GM10248 (cell line): ENCODE measurements at regions of chrX and their contacts with region 1.

Region 1: GRCh38 chrX:136028251-136028984 is 43.2 kb downstream of the SLC9A6 start:
- DNase-seq: peak; percentile 20
- CTCF ChIP-seq: peak; percentile 51

Region 2: GRCh38 chrX:136039968-136040367 is 11.6 kb after region 1 on chrX:
- CTCF ChIA-PET with region 1: interaction called, 24 read pairs
- POLR2A ChIA-PET with region 1: no interaction called
- DNase-seq: no peak
- CTCF ChIP-seq: no peak

Region 3: GRCh38 chrX:136115126-136115903 is 86.9 kb after region 1 on chrX:
- CTCF ChIA-PET with region 1: no interaction called
- POLR2A ChIA-PET with region 1: no interaction called
- DNase-seq: no peak
- CTCF ChIP-seq: no peak

Region 4: DNA sequence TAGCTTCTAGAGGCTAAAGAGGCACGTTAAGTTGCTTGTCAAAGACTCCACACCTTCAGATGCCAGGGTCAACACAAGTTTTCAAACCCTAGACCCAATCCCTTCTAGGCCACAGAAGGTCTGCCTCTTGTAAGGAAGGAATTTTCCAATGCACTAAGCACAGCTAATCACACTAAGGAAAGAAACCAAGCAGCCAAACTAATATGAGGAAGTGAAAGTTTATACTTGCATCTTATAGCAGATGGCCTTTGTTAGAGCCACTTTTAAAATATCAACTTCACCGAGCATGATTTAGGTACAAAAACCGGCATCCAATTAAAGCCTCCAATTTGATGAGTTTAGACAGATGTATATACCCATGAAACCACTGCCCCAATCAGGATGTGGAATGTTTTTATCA is 128.8 kb after region 1 on chrX:
- CTCF ChIA-PET with region 1: interaction called, 83 read pairs
- POLR2A ChIA-PET with region 1: no interaction called
- DNase-seq: peak; percentile 17
- CTCF ChIP-seq: no peak

Region 5: GRCh38 chrX:136162831-136163570 is 134.6 kb after region 1 on chrX:
- CTCF ChIA-PET with region 1: interaction called, 83 read pairs
- POLR2A ChIA-PET with region 1: no interaction called
- DNase-seq: peak; percentile 26
- CTCF ChIP-seq: peak; percentile 70

Region 6: DNA sequence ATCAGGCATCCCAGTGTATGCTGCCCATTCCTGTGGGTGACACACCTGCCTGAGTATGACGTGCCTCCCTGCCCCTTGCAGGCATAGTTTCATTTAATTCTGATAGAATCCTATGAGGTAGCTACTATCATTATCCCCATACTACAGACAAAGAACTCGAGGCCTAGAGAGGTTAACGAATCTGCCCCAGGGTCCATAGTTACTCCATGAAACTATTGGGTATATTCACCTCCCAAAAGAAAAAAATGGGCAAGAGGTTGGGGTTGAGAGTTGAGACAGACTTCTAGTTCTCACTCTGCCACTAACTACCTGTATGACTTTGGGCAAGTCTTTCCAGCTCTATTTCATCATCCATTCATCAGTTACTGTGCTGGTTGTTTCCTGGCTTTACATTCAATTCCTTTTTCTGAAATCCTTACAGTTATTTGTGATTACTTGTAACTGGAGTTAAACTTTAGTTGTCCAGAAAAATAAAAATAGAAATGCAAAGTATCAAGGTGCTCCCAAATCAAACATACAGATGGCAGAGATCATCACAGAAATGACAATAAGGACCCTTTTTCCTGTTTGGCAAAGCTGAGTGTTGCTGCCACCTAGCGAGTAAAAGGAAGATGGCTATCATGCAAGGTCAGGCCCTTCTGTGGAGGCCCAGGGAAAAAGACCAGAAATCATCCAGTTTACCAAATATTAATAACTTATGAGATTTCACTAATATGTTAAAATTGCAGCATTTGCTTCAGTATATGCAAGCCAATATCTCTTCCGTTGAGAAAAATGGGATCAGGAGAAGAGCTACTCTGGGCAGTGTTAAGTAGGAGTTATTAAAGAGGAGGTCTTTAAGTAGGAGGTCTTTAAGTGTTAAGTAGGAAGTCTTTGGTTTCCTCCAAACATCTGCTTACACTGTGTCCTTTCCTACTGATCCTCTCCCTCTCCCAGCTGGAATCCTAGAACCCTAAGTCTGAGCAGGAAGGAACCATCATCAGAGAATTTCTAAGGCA is 239.9 kb after region 1 on chrX:
- CTCF ChIA-PET with region 1: interaction called, 35 read pairs
- POLR2A ChIA-PET with region 1: no interaction called
- DNase-seq: peak; percentile 34
- CTCF ChIP-seq: peak; percentile 56

Region 7: DNA sequence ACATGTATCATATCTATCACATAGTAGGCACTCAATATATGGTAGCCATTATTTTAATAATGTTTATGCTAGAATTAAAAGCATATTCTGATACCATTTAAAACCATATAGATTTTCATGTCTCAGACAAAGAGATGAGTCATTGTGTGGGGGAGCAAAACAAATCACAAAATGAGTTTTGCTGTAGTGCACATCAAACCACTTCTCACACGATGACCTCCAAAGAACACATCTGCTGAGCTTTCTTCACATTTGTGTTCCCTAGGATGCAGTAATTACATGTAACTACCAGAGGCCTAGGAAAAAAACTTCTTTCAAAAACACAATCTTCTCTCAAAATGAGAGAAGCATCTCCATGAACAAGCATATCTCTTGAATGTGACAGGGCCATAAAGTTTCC is 403.2 kb after region 1 on chrX:
- CTCF ChIA-PET with region 1: no interaction called
- POLR2A ChIA-PET with region 1: no interaction called
- DNase-seq: no peak
- CTCF ChIP-seq: no peak